ENCODE measurements at regions of chr11 and their contacts with region 1.

Region 1: DNA sequence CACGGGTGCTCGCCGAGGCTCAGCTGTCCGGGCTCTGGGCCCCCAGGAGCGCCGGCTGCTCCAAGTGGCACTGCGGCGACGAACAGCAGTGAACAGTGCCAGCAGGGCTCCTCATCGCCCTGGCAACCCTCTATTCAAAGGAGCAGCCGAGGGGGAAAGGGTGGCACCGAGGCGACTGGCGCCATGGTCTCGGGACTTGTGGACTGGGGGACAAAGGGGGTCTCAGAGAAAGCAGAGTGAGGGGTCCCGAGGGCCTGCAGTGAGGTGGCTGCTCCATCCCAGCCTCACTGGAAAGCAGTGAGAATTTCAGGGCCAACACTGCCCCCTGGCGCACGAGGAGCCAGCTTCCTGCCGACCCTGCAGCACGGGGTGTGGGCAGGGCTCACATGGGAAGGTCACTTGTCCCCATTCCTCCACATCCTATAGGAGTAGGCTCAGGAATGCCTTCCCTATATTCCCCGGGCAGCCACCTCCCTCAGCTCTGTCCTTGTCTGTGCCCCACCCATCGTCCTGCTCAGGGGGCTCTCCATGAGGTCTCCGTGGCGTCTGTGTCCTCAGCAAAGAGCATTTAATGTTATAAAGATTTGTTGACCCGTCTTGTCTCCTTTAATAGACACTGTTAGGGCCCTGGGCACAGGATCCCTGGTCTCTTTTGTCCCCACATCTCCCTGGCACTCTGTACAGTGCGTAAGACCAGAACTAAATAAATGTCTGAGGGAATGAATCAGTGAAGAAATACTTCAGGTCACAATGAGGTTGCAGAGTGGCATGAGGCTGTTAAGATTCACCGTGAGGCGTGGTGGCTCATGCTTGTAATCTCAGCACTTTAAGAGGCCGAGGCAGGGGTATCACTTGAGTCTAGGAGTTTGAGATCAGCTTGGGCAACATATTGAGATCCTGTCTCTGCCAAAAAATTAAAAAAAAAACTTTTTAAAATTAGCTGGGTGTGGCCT is 26.4 kb downstream of the LRFN4 start:
- DNase-seq: peak; percentile 88
- ATAC-seq: peak; percentile 76
- H3K4me3 ChIP-seq: no peak overlapping the region
- H3K27ac ChIP-seq: peak overlapping the region; percentile 78
- H3K4me1 ChIP-seq: peaks cover 38% of the 10 kb centered on the region
- H3K27me3 ChIP-seq: no peaks in the 10 kb centered on the region
- CTCF ChIP-seq: peak; percentile 88

Region 2: DNA sequence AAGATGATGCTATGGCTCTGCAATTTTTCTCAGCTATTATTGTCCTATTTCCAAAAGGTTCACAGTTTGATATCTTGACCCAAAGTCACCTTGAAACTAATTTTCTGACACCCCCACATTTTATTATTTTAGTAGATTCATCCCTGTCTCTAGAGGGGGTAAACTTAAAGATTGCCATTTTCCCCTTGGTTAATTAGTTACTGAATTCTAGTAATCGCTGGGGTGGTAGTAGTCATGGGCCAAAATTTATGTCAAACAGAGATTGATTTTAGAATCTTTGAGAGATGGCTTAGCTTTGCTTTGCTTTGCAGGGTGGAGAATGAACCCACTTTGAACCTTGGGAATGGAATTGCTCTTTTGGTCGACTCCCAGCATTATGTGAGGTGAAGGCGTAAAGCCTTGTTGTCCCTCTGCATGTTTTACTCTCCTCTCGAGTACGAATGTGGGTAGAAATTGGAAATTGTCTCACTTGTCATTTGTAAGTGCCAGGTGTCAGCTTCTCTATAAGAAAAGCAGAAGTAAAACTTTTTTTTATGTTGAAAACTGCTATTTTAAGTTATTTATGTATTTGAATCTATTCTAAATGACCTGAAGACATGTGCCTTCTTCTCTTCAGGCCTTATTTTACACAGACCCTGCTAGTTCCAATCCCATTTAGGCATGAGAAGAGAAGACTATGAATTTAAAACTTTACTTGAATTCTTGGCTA is 82.4 kb before region 1 on chr11:
- CTCF ChIA-PET with region 1: no interaction called
- POLR2A ChIA-PET with region 1: no interaction called
- intact Hi-C with region 1: no loop called
- DNase-seq: no peak
- ATAC-seq: no peak
- H3K4me3 ChIP-seq: no peak overlapping the region
- H3K27ac ChIP-seq: no peak overlapping the region
- H3K4me1 ChIP-seq: no peaks in the 10 kb centered on the region
- H3K27me3 ChIP-seq: no peaks in the 10 kb centered on the region
- CTCF ChIP-seq: no peak

Region 3: DNA sequence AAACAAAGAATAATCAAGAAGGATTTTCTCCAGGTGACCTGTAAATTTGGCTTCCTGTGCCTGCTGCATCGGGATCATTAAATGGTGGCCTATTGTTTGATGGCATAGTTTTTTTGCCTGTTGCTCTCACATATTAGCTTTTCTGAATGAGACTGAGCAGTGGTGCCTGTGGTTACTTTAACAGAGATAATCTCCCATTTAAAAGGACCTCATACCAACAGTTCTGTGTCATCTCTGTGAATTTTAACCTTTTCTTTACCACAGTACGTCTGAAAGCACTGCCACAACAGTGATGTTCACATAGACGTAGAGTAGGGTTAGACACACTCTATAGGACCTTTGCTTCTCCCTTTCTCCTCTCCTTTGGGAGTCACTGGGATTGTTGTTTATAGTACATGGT is 62.9 kb before region 1 on chr11:
- CTCF ChIA-PET with region 1: no interaction called
- POLR2A ChIA-PET with region 1: no interaction called
- intact Hi-C with region 1: no loop called
- DNase-seq: no peak
- ATAC-seq: no peak
- H3K4me3 ChIP-seq: no peak overlapping the region
- H3K27ac ChIP-seq: no peak overlapping the region
- H3K4me1 ChIP-seq: peaks cover 18% of the 10 kb centered on the region
- H3K27me3 ChIP-seq: no peaks in the 10 kb centered on the region
- CTCF ChIP-seq: no peak

Region 4: GRCh38 chr11:66844496-66845142 is 38.7 kb before region 1 on chr11:
- CTCF ChIA-PET with region 1: interaction called, 11 read pairs
- POLR2A ChIA-PET with region 1: no interaction called
- intact Hi-C with region 1: no loop called
- DNase-seq: no peak
- ATAC-seq: no peak
- H3K4me3 ChIP-seq: peak overlapping the region; percentile 96
- H3K27ac ChIP-seq: no peak overlapping the region
- H3K4me1 ChIP-seq: peaks cover 35% of the 10 kb centered on the region
- H3K27me3 ChIP-seq: no peaks in the 10 kb centered on the region
- CTCF ChIP-seq: no peak

Region 5: DNA sequence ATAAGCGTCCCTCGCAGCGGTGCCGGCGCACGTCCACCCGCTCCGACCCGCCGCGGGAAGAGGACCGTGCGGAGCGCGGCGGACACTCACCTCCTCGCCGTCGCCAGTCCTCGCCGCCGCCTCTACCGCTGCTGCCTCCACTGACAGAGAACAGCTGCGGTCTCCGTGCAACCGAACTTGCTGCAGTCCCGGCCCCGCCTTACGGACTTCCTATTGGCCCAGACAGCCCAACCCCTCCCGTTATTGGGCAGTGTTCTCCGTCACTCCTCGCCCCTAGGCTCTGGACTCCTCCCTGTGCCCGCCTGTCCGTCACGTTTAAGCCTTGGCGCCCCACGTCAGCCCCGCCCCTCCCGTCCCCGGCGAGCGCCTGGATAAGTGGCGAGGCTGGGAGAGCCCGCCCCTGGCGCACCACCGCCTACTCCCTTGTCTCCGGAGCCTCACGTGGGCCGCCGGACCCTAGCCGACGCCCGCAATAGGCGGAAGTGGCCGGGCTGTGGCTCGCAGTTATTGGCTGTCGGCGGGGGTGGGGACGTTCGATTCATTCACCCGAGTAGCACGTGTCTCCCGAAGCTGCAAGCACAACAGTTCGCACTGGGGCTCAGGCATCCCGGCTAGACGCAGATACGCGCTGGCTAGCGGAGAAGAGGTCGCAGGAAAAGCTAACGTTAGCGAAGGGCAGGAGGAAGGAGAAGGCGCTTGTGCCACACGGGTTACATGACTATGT is 75.1 kb after region 1 on chr11 and contains the start of gene PC:
- CTCF ChIA-PET with region 1: interaction called, 3 read pairs
- POLR2A ChIA-PET with region 1: no interaction called
- intact Hi-C with region 1: loop called (anchors 5 kb)
- DNase-seq: peak; percentile 99
- ATAC-seq: peak; percentile 95
- H3K4me3 ChIP-seq: peak within 1 kb of the TSS; percentile 72
- H3K27ac ChIP-seq: peak within 1 kb of the TSS; percentile 8; the same call in 1 of the 2 replicates
- H3K4me1 ChIP-seq: peaks cover 15% of the 10 kb centered on the region
- H3K27me3 ChIP-seq: no peaks in the 10 kb centered on the region
- CTCF ChIP-seq: no peak
- total RNA-seq, gene PC: 24.5 and 39.7 TPM in 2 replicates

Region 6: DNA sequence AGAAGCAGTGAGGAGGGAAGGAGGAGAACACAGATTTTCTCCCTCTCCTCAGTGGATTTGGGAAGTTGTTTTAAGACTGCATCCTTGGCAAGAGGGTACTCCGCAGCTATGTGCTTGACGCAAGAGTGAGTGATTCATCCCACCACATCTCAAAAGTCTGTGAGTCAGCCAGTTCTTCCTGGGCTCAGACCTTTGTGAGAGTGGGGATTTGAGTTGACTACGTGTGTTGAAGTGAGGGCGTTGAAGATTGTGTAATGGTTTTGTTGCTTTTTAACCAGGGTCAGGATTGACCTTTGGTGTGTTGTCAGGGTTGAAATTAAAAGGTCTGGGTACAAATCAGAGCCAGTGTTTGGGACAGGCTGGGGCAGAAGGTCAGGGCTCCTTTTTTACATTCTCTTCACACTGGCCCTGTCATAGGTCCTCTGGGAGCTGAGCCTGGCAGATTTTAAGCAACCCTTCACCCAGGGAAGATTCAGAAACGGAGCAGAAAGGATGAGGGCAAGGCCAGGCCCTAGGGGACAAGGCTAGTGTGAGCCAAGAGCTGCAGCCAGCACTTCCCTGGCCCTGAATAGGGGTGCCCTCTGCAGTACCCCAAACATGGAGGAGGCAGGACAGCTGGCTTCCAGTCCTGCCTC is 87.6 kb after region 1 on chr11:
- CTCF ChIA-PET with region 1: no interaction called
- POLR2A ChIA-PET with region 1: no interaction called
- intact Hi-C with region 1: no loop called
- DNase-seq: peak; percentile 99
- ATAC-seq: peak; percentile 91
- H3K4me3 ChIP-seq: peak overlapping the region; percentile 13; the same call in 1 of the 2 replicates
- H3K27ac ChIP-seq: peak overlapping the region; percentile 94
- H3K4me1 ChIP-seq: peaks cover 44% of the 10 kb centered on the region
- H3K27me3 ChIP-seq: no peaks in the 10 kb centered on the region
- CTCF ChIP-seq: no peak

Region 7: DNA sequence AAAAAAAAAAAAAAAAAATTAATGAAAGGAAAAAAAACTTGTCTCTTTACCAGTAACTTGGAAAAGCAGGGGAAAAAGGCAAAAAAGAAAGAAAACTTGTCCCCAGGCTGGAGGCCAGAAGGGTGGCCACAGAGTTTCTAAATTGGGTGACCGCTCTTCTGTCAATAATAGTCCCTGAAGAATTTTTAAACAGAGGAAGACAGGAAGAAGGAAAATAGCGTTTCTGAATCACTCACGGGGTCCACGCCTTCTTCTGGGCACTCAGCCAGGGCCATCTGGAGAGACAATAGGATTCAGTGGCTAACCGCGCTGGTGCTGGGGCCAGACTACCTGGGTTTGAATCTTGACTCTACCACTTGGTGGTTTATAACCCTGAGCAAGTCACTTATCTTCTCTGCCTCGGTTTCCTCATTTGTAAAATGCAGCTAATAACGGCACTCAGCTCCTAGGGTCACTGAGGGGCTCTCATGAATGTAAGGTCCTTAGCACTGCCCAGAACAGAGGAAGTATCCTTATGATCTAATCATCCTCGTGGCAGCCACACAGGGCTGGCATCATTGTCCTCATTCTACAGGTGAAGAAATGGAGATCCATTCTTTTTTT is 98.8 kb after region 1 on chr11:
- CTCF ChIA-PET with region 1: interaction called, 11 read pairs
- POLR2A ChIA-PET with region 1: no interaction called
- intact Hi-C with region 1: no loop called
- DNase-seq: peak; percentile 99
- ATAC-seq: peak; percentile 85
- H3K4me3 ChIP-seq: no peak overlapping the region
- H3K27ac ChIP-seq: peak overlapping the region; percentile 52
- H3K4me1 ChIP-seq: peaks cover 28% of the 10 kb centered on the region
- H3K27me3 ChIP-seq: no peaks in the 10 kb centered on the region
- CTCF ChIP-seq: no peak

Region 8: GRCh38 chr11:67015048-67015447 is 131.8 kb after region 1 on chr11:
- CTCF ChIA-PET with region 1: no interaction called
- POLR2A ChIA-PET with region 1: no interaction called
- intact Hi-C with region 1: no loop called
- DNase-seq: no peak
- ATAC-seq: no peak
- H3K4me3 ChIP-seq: no peak overlapping the region
- H3K27ac ChIP-seq: no peak overlapping the region
- H3K4me1 ChIP-seq: no peaks in the 10 kb centered on the region
- H3K27me3 ChIP-seq: no peaks in the 10 kb centered on the region
- CTCF ChIP-seq: no peak

Region 9: DNA sequence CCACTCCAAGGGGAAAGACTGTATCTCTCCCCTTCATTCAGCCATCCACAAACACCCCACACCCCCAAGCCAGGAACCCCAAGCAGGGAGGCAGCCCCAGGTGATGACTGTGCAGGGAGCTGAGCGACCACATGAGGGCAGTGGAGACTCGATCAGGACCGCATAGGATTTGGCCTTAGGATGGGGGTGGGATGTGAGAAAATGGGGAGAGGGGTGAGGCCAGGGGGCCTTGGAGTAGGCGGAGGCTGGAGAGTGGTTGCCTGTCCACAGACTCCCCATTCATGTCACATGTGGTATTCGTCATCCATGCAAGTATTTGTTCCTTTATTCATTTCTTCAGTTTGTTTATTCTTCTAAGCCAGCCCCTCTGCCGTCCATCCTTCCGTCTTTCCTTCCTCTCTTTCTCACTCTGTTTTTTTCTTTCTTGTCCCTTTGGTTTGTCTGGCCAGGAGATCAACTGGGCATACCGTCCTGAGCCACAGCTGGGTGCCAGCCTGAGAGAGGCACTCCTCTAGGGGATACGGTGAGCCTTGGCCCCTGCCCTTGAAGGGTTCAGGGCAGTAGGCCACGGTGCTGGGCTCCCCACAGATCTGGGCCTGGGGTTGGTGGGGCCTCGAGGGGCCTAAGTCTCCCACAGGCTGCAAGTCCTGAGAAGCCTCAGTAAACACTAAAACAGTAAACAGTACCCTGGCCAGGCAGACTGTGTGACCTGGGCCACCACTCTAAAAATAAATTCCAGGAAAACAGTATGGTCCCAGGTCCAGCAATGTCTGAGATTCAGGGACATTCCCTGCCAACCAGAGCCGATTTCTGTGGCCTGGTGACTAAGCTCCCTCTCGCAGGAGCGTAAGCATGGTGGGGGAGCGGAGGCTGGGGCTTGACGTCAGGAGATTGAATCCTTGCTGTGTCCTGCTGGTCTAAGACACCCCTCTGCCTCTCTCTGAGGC is 170.9 kb after region 1 on chr11:
- CTCF ChIA-PET with region 1: interaction called, 3 read pairs
- POLR2A ChIA-PET with region 1: interaction called, 5 read pairs
- intact Hi-C with region 1: loop called (anchors 10 kb)
- DNase-seq: peak; percentile 72
- ATAC-seq: peak; percentile 18
- H3K4me3 ChIP-seq: no peak overlapping the region
- H3K27ac ChIP-seq: peak overlapping the region; percentile 98
- H3K4me1 ChIP-seq: peaks cover 37% of the 10 kb centered on the region
- H3K27me3 ChIP-seq: no peaks in the 10 kb centered on the region
- CTCF ChIP-seq: peak; percentile 94

Measured in PC-3 (cell line).